ENCODE measurements at regions of chr12 and their contacts with region 1.

Region 1: DNA sequence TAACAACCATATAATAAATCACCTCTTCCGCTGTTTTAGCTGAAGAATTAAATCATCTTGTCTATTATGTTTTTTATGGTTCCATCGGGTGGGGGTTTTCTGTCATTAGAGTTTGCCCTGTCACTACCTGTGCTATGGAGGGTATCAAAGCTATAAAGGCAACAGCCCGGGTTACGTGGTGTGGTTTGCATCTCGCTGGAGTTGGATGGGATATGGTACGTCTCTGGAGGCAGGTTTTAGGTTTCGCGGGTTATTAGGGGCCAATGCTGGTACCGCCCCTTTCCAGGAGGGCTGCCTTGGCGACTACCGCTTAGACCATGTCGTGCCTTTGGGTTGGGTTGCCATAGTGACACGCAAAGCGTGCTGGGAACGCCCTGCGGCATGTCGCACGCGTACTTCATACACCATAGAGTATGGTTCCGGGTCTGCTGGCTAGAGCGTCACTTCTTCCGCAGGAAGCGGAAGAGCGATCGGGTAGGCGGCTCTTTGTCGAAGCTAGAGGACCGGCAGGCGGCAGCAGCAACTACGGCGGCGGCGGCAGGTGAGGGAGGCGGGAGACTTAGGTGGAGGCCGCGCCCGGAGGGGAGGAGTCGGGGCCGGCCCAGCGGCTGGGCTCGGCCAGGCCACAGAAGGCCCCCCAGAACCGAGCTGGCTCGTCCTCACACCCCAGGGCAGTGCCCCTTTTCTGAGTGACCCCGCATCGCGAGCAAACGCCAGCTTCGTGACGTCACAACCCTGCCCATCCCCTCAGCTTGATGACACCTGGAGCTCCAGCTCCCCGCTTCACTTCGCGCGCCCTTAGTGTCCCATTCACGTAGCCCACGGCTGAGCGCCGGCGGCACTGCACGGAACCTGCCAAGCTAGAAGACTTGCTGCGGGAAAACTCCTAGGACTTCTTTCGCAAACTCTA is at the start of gene ZC3H10:
- DNase-seq: peak; percentile 91 to 100 (median 96)
- ATAC-seq: peak; percentile 70
- H3K4me3 ChIP-seq: peak within 1 kb of the TSS; percentile 77 to 86
- H3K4me3 Mint-ChIP-seq: peak within 1 kb of the TSS; percentile 98
- H3K27ac ChIP-seq: peak within 1 kb of the TSS; percentile 87 to 95
- H3K27ac Mint-ChIP-seq: peak within 1 kb of the TSS; percentile 99
- H3K4me1 ChIP-seq: peaks cover 30% of the 10 kb centered on the region
- H3K4me1 Mint-ChIP-seq: peaks cover 38% of the 10 kb centered on the region
- H3K27me3 ChIP-seq: no peaks in the 10 kb centered on the region
- H3K27me3 Mint-ChIP-seq: no peaks in the 10 kb centered on the region
- CTCF ChIP-seq: peak; percentile 33
- total RNA-seq, gene ZC3H10: 9.0 TPM

Region 2: DNA sequence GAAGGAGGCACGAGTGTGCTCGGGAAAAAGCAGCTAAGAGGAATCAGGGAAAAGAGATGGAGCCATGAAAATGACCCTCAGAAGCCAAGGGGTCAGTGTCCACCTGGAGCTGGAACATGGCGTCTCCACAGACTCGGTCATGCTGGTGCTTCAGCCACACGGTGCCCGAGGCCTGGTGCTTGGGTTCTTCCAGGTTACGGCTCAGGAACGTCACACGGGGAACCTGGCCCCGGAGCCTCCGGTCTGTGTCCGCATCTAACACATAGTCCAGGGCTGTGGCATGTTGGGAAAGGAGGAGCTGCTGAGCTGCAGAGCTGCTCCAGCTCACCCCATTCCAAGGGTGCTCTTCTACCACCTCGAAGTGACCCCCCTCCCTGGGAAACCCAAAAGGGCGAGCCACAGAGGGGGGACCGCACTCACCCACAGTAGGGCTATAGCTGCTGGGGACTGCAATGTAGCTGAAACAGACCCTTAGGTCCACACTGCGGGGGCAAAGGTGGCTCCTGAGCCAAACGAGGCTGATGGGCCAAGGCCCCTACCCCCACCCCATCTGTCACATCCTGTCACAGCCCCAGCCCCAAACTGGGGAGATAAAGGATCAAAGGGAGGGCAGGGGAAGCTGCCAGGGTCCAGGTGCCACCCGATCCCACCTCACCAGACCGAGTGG is 421.1 kb before region 1 on chr12:
- CTCF ChIA-PET with region 1: no interaction called
- POLR2A ChIA-PET with region 1: no interaction called
- intact Hi-C with region 1: no loop called
- DNase-seq: no peak
- ATAC-seq: no peak
- H3K4me3 ChIP-seq: no peak overlapping the region
- H3K4me3 Mint-ChIP-seq: no peak overlapping the region
- H3K27ac ChIP-seq: no peak overlapping the region
- H3K27ac Mint-ChIP-seq: no peak overlapping the region
- H3K4me1 ChIP-seq: no peaks in the 10 kb centered on the region
- H3K4me1 Mint-ChIP-seq: no peaks in the 10 kb centered on the region
- H3K27me3 ChIP-seq: no peaks in the 10 kb centered on the region
- H3K27me3 Mint-ChIP-seq: no peaks in the 10 kb centered on the region
- CTCF ChIP-seq: no peak

Region 3: GRCh38 chr12:55817346-55818139 is 300.5 kb before region 1 on chr12 and contains the starts of genes ORMDL2 and SARNP:
- CTCF ChIA-PET with region 1: no interaction called
- POLR2A ChIA-PET with region 1: interaction called, 3 read pairs
- intact Hi-C with region 1: loop called in 1 of 2 experiments (anchors 5 kb)
- DNase-seq: peak; percentile 88 to 100 (median 94)
- ATAC-seq: peak; percentile 91
- H3K4me3 ChIP-seq: peak within 1 kb of the TSS; percentile 81 to 89
- H3K4me3 Mint-ChIP-seq: no peak within 1 kb of the TSS
- H3K27ac ChIP-seq: peak within 1 kb of the TSS; percentile 81 to 89
- H3K27ac Mint-ChIP-seq: no peak within 1 kb of the TSS
- H3K4me1 ChIP-seq: peaks cover 38% of the 10 kb centered on the region
- H3K4me1 Mint-ChIP-seq: peaks cover 44% of the 10 kb centered on the region
- H3K27me3 ChIP-seq: no peaks in the 10 kb centered on the region
- H3K27me3 Mint-ChIP-seq: no peaks in the 10 kb centered on the region
- CTCF ChIP-seq: no peak
- total RNA-seq, gene ORMDL2: 13.2 to 15.1 TPM
- total RNA-seq, gene SARNP: 48.0 to 50.3 TPM

Region 4: GRCh38 chr12:55874443-55874842 is 243.6 kb before region 1 on chr12:
- CTCF ChIA-PET with region 1: no interaction called
- POLR2A ChIA-PET with region 1: no interaction called
- intact Hi-C with region 1: no loop called
- DNase-seq: no peak
- ATAC-seq: no peak
- H3K4me3 ChIP-seq: no peak overlapping the region
- H3K4me3 Mint-ChIP-seq: no peak overlapping the region
- H3K27ac ChIP-seq: no peak overlapping the region
- H3K27ac Mint-ChIP-seq: no peak overlapping the region
- H3K4me1 ChIP-seq: no peaks in the 10 kb centered on the region
- H3K4me1 Mint-ChIP-seq: no peaks in the 10 kb centered on the region
- H3K27me3 ChIP-seq: no peaks in the 10 kb centered on the region
- H3K27me3 Mint-ChIP-seq: no peaks in the 10 kb centered on the region
- CTCF ChIP-seq: no peak

Region 5: GRCh38 chr12:56041552-56042429 is 76.2 kb before region 1 on chr12 and contains the start of gene RPS26:
- CTCF ChIA-PET with region 1: interaction called, 52 read pairs
- POLR2A ChIA-PET with region 1: interaction called, 13 read pairs
- intact Hi-C with region 1: loop called (anchors 1 kb)
- DNase-seq: peak; percentile 79 to 99 (median 92)
- ATAC-seq: peak; percentile 93
- H3K4me3 ChIP-seq: peak within 1 kb of the TSS; percentile 71 to 83
- H3K4me3 Mint-ChIP-seq: peak within 1 kb of the TSS; percentile 99
- H3K27ac ChIP-seq: peak within 1 kb of the TSS; percentile 75 to 95
- H3K27ac Mint-ChIP-seq: peak within 1 kb of the TSS; percentile 99
- H3K4me1 ChIP-seq: peaks cover 29% of the 10 kb centered on the region
- H3K4me1 Mint-ChIP-seq: peaks cover 42% of the 10 kb centered on the region
- H3K27me3 ChIP-seq: no peaks in the 10 kb centered on the region
- H3K27me3 Mint-ChIP-seq: no peaks in the 10 kb centered on the region
- CTCF ChIP-seq: peak; percentile 48
- total RNA-seq, gene RPS26: 33.8 to 36.7 TPM

Region 6: DNA sequence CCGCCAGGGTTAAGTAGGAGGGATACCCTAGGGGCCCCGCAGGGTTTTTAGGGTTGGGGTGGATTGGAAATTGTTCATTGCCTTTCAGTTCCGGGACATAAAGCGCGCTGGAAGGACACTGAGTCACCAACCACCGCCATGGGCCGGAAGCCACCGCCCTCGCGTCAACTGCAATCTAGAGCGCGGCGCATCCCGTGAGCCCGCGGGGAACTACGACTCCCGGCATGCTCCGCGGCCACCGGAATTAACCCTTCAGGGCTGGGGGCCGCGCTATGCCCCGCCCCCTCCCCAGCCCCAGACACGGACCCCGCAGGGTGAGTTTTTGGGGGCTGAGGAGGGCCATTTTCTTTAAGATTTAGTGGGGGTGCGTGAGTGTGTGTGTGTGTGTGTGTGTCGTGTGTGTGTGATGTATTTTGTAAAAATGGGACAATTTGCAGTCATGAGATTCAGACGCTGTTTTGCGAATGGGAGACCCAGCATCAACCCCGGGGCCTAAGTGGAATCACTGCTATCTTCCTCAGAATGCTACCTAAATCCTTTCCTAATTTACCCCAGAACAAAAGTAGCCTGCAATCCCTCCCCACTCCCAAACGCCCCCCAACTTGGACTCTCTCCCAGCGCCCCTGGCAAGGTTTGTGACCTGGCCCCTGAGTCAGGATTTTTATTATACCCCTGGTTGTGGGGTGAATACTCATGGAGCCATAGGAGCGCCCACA is 34.4 kb after region 1 on chr12 and contains the start of gene MYL6B:
- CTCF ChIA-PET with region 1: interaction called, 8 read pairs
- POLR2A ChIA-PET with region 1: interaction called, 12 read pairs
- intact Hi-C with region 1: loop called (anchors 1 to 5 kb)
- DNase-seq: peak; percentile 80 to 96 (median 93)
- ATAC-seq: peak; percentile 90
- H3K4me3 ChIP-seq: peak within 1 kb of the TSS; percentile 65 to 95
- H3K4me3 Mint-ChIP-seq: peak within 1 kb of the TSS; percentile 90
- H3K27ac ChIP-seq: peak within 1 kb of the TSS; percentile 75 to 90
- H3K27ac Mint-ChIP-seq: peak within 1 kb of the TSS; percentile 99
- H3K4me1 ChIP-seq: peaks cover 30% of the 10 kb centered on the region
- H3K4me1 Mint-ChIP-seq: peaks cover 29% of the 10 kb centered on the region
- H3K27me3 ChIP-seq: no peaks in the 10 kb centered on the region
- H3K27me3 Mint-ChIP-seq: no peaks in the 10 kb centered on the region
- CTCF ChIP-seq: no peak
- total RNA-seq, gene MYL6B: 4.0 to 5.9 TPM

Region 7: DNA sequence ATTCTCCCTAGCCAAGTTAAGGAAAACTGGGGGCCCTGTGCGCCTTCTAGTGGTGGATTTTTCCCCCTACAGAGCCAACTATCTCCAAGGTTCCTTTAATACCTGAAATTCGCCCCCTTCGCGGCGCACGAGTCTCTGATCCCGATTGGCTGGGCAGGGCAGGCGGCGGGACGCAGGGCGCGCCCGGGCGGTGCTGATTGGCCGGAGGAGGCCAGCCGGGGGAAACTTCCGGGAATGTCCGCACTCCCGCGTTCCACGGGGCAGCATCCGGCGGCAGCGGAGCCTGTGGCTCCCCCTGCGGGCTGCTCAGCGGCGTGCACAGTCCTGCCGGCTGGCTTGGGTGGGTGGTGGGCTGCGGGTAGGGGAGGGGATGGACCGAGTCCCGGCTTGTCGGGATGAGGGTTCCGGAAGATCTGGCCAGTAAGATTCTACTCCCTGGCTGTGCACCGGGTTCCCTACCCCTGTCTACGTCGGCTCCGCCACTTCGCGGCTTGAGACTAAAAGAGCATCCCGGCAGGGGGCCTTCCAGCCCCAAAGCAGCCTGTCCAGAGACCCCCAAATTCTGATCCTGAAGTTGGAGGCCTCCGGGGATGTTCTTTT is 106.2 kb after region 1 on chr12 and contains the start of gene NABP2:
- CTCF ChIA-PET with region 1: interaction called, 25 read pairs
- POLR2A ChIA-PET with region 1: interaction called, 30 read pairs
- intact Hi-C with region 1: loop called (anchors 1 kb)
- DNase-seq: peak; percentile 74 to 97 (median 91)
- ATAC-seq: peak; percentile 64
- H3K4me3 ChIP-seq: peak within 1 kb of the TSS; percentile 65 to 68
- H3K4me3 Mint-ChIP-seq: peak within 1 kb of the TSS; percentile 95
- H3K27ac ChIP-seq: peak within 1 kb of the TSS; percentile 53 to 85
- H3K27ac Mint-ChIP-seq: peak within 1 kb of the TSS; percentile 99
- H3K4me1 ChIP-seq: peaks cover 29% of the 10 kb centered on the region
- H3K4me1 Mint-ChIP-seq: peaks cover 44% of the 10 kb centered on the region
- H3K27me3 ChIP-seq: no peaks in the 10 kb centered on the region
- H3K27me3 Mint-ChIP-seq: no peaks in the 10 kb centered on the region
- CTCF ChIP-seq: peak; percentile 84
- total RNA-seq, gene NABP2: 6.8 to 7.4 TPM

Region 8: DNA sequence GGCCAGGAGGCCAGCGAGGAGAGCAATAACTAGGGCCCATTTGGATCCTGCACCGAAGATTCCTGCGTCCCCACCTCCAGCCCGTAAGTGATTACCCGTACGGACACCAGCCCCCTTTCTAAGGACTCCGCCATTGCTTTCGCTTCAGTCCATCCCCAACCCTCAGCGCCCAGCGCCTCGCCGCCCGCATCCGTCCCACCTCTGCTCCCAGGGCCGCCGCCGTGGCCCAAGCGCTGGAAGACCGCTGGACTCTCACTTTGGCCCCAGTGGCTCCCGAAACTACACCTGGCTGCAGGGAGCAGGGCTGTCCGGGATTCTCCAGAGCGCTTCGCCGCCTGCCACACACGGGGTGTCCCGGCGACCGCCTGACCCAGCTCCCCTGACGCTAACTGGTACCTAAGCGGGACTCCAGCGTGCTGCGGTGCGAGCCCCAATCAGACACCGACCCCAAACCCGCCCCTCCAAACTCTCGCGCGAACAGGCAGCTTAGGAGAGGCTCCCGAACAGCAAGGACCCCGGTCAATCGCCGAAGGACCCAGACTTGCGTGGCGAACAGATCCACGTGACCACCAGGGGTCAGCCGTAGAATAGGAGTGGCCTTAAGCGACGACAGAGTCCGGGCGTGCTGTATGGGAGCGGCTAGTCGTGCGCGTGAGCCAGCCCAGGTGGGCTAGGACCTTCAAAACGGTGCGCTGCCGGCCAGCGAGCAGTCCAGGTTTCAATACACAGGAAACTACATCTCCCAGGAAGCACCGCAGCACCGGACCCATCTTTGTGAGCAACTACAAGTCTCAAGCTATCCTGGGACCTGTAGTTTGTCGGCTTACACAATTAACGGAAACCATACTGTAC is 197.8 kb after region 1 on chr12 and contains the start of gene CNPY2:
- CTCF ChIA-PET with region 1: no interaction called
- POLR2A ChIA-PET with region 1: interaction called, 4 read pairs
- intact Hi-C with region 1: loop called in 1 of 2 experiments (anchors 1 kb)
- DNase-seq: peak; percentile 89 to 97 (median 95)
- ATAC-seq: peak; percentile 92
- H3K4me3 ChIP-seq: peak within 1 kb of the TSS; percentile 86 to 99
- H3K4me3 Mint-ChIP-seq: peak within 1 kb of the TSS; percentile 99
- H3K27ac ChIP-seq: peak within 1 kb of the TSS; percentile 70 to 98
- H3K27ac Mint-ChIP-seq: peak within 1 kb of the TSS; percentile 98
- H3K4me1 ChIP-seq: peaks cover 10% of the 10 kb centered on the region
- H3K4me1 Mint-ChIP-seq: peaks cover 16% of the 10 kb centered on the region
- H3K27me3 ChIP-seq: no peaks in the 10 kb centered on the region
- H3K27me3 Mint-ChIP-seq: no peaks in the 10 kb centered on the region
- CTCF ChIP-seq: no peak
- total RNA-seq, gene CNPY2: 23.5 to 33.9 TPM

Region 9: DNA sequence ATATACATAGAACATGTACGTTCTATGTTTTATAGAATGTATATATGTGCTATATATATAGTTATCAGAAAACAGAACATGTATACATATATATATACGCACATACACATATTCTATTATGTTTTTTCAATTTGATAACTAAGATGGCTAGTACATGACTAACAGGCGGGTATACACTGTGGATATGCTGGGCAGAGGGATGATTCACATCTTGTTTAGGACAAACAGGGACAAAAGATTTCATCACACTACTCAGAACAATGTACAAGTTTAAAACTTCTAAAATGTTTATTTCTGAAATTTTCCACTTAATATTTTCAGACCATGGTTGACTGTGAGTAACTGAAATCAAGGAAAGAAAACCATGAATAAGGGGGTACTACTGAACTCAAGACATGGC is 313.8 kb after region 1 on chr12:
- CTCF ChIA-PET with region 1: no interaction called
- POLR2A ChIA-PET with region 1: no interaction called
- intact Hi-C with region 1: no loop called
- DNase-seq: no peak
- ATAC-seq: no peak
- H3K4me3 ChIP-seq: no peak overlapping the region
- H3K4me3 Mint-ChIP-seq: no peak overlapping the region
- H3K27ac ChIP-seq: no peak overlapping the region
- H3K27ac Mint-ChIP-seq: no peak overlapping the region
- H3K4me1 ChIP-seq: no peaks in the 10 kb centered on the region
- H3K4me1 Mint-ChIP-seq: no peaks in the 10 kb centered on the region
- H3K27me3 ChIP-seq: no peaks in the 10 kb centered on the region
- H3K27me3 Mint-ChIP-seq: no peaks in the 10 kb centered on the region
- CTCF ChIP-seq: no peak

Region 10: DNA sequence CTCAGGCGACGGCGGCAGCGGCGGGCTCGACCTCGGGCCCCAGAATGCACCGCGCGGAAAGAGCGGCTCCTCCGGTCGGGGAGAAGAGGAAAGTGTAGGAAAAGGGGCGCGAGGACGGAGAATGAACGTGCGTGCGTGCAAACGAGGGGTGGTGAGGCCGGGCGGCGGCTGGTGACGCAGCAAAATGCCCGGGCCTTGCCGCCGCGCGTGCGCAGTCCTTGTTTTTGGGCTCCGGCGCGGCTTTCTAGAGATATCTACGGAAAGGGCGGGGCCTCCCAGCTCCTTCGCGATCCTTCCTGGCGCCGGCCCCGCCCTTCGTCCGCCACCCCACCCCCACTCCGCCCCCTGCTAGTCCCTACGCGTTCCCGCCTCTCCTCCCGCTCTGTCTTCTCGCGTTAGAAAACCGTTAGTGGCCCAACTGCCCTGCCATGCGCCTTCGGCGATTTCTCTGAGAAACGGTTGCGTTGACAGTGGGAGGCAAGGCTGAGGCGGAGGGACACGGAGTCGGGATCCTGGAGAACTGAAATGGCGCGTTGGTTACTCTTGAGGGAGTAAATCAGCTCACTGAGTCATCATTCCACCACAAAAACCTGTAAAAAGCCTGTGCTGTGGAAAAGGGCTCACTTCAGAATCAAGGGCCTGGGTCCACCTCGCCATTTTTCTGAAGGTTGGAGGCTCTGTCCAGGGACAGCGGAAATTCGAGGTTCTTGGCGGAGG is 570.3 kb after region 1 on chr12 and contains the start of gene PTGES3:
- CTCF ChIA-PET with region 1: no interaction called
- POLR2A ChIA-PET with region 1: interaction called, 7 read pairs
- intact Hi-C with region 1: loop called in 1 of 2 experiments (anchors 5 kb)
- DNase-seq: peak; percentile 94 to 99 (median 97)
- ATAC-seq: peak; percentile 69
- H3K4me3 ChIP-seq: peak within 1 kb of the TSS; percentile 75 to 99
- H3K4me3 Mint-ChIP-seq: peak within 1 kb of the TSS; percentile 98
- H3K27ac ChIP-seq: peak within 1 kb of the TSS; percentile 97 to 98
- H3K27ac Mint-ChIP-seq: peak within 1 kb of the TSS; percentile 99
- H3K4me1 ChIP-seq: peaks cover 35% of the 10 kb centered on the region
- H3K4me1 Mint-ChIP-seq: peaks cover 34% of the 10 kb centered on the region
- H3K27me3 ChIP-seq: no peaks in the 10 kb centered on the region
- H3K27me3 Mint-ChIP-seq: no peaks in the 10 kb centered on the region
- CTCF ChIP-seq: no peak
- total RNA-seq, gene PTGES3: 148 to 154 TPM

Measured in CD8-positive, alpha-beta T cell (primary cell).